ENCODE measurements at regions of chr1 and their contacts with region 1.

Region 1: DNA sequence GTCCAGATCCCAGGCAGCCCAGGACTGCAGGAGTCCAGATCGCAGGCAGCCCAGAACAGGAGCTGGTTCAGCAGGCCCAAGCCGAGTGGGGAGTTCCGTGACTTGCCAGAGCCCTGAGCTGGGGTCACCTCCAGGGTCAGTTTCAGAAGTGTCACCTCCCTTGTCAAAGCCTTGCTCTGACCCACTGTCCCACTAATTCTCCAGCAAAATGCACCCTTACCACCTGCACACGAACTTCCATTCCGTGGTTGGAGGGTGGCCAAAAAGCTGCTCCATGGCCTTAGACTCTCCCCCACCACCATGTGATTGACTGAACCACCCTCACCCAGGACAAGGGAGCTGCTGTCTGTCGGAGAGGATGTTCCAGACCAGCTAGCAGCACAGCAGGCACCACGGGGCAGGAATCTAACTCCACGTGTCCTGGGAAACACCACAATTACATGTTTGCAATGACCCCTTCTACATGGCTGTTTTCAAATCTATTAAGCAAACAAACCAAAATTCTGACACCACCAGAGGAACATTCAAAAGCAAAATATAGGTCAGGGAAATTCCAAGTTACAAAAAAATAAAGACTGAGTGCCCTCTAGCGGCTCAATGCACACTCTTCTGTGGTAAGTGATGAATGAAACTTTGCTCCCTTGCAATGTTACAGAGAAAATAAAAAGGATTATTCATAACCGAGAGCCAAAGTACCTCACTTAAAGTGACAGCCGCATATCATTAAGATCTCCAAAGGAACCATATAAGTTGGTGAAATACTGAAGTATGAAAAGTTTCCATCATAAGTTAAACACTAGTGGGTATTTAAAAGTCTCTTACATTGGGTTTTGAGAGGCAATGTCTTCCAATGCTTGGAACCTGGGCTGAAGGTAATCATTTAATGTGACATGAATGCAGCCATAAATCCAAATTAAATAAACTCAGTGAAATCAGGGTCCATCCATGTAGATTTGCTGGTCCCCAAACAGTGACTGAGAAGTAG is 76.3 kb downstream of the NPHP4 start:
- DNase-seq: peak in 1 of 2 experiments; percentile 45
- H3K4me3 ChIP-seq: no peak overlapping the region
- H3K27ac ChIP-seq: no peak overlapping the region
- H3K4me1 ChIP-seq: peaks cover 0 to 7% (median 2%) of the 10 kb centered on the region in 4 experiments; a peak in 2 of 7 replicates
- H3K27me3 ChIP-seq: no peaks in the 10 kb centered on the region
- CTCF ChIP-seq: peak in 2 of 3 experiments; percentile 52 to 63; a peak in 3 of 4 replicates
- EP300 ChIP-seq: no peak
- POLR2A ChIP-seq: no peak
- RAD21 ChIP-seq: peak; percentile 65 to 74

Region 2: DNA sequence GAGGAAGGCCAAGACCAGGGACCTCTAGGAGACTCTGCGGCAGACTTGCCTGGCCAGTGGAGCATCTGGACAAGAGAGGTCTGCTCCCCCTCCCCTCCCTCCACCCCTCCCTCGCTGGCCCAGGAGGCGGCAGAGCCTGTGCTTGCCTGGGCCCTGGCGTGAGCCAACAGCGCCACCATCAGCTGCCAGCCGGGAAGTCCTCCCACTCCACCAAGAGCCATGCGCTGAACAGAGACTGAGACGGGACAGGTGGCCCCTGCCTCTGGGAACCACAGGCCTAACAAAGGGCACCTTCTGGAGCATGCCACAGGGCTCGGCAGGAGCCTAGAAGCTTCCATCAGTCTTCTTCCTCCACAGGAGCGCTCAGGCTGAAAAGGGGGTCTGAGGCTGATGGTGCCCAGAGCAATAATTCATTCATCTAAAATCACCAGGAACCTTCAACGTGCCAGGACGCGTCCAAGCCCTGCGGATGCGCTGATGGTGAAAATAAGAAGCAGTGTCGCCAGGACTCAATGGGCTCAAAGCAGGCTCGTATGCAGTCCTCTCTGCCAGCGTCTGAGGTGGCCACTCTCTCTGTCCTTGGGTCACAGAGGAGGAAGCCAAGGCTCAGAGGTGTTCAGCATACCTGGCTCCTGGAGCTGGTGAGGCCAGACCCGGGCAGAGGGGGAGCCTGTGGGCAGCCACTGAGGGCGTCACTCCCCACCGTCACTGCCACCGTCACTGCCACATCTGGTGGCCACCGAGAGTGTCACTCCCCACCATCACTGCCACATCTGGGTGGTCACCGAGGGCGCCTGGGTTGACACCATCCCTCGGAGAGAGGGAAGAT is 84.9 kb before region 1 on chr1:
- CTCF ChIA-PET with region 1: interaction called, 20 read pairs
- POLR2A ChIA-PET with region 1: no interaction called
- DNase-seq: peak; percentile 73 to 93
- H3K4me3 ChIP-seq: no peak overlapping the region
- H3K27ac ChIP-seq: no peak overlapping the region
- H3K4me1 ChIP-seq: peaks cover 10 to 20% (median 15%) of the 10 kb centered on the region in 4 experiments; a peak in 6 of 7 replicates
- H3K27me3 ChIP-seq: peaks cover 0 to 7% (median 0%) of the 10 kb centered on the region in 4 experiments; a peak in 2 of 7 replicates
- CTCF ChIP-seq: peak; percentile 96 to 99 (median 98)
- EP300 ChIP-seq: 0 out of 3 replicates have a peak, but pooled peaks of 1 of the 2 experiments have one; percentile 21
- POLR2A ChIP-seq: no peak
- RAD21 ChIP-seq: peak; percentile 100

Region 3: GRCh38 chr1:5836776-5837440 is 79.0 kb before region 1 on chr1:
- CTCF ChIA-PET with region 1: interaction called, 20 read pairs
- POLR2A ChIA-PET with region 1: no interaction called
- DNase-seq: no peak
- H3K4me3 ChIP-seq: no peak overlapping the region
- H3K27ac ChIP-seq: no peak overlapping the region
- H3K4me1 ChIP-seq: peaks cover 2 to 16% (median 5%) of the 10 kb centered on the region in 4 experiments; a peak in 6 of 7 replicates
- H3K27me3 ChIP-seq: no peaks in the 10 kb centered on the region
- CTCF ChIP-seq: no peak
- EP300 ChIP-seq: no peak
- POLR2A ChIP-seq: no peak
- RAD21 ChIP-seq: no peak

Region 4: GRCh38 chr1:5856246-5856815 is 59.5 kb before region 1 on chr1:
- CTCF ChIA-PET with region 1: interaction called, 11 read pairs
- POLR2A ChIA-PET with region 1: no interaction called
- DNase-seq: no peak
- H3K4me3 ChIP-seq: no peak overlapping the region
- H3K27ac ChIP-seq: no peak overlapping the region
- H3K4me1 ChIP-seq: peaks cover 0 to 3% (median 0%) of the 10 kb centered on the region in 4 experiments; a peak in 2 of 7 replicates
- H3K27me3 ChIP-seq: no peaks in the 10 kb centered on the region
- CTCF ChIP-seq: no peak
- EP300 ChIP-seq: no peak
- POLR2A ChIP-seq: no peak
- RAD21 ChIP-seq: no peak

Region 5: GRCh38 chr1:5950994-5951785 is 35.3 kb after region 1 on chr1:
- CTCF ChIA-PET with region 1: no interaction called
- POLR2A ChIA-PET with region 1: no interaction called
- DNase-seq: no peak
- H3K4me3 ChIP-seq: no peak overlapping the region
- H3K27ac ChIP-seq: no peak overlapping the region
- H3K4me1 ChIP-seq: no peaks in the 10 kb centered on the region
- H3K27me3 ChIP-seq: no peaks in the 10 kb centered on the region
- CTCF ChIP-seq: no peak
- EP300 ChIP-seq: no peak
- POLR2A ChIP-seq: no peak
- RAD21 ChIP-seq: no peak

Region 6: DNA sequence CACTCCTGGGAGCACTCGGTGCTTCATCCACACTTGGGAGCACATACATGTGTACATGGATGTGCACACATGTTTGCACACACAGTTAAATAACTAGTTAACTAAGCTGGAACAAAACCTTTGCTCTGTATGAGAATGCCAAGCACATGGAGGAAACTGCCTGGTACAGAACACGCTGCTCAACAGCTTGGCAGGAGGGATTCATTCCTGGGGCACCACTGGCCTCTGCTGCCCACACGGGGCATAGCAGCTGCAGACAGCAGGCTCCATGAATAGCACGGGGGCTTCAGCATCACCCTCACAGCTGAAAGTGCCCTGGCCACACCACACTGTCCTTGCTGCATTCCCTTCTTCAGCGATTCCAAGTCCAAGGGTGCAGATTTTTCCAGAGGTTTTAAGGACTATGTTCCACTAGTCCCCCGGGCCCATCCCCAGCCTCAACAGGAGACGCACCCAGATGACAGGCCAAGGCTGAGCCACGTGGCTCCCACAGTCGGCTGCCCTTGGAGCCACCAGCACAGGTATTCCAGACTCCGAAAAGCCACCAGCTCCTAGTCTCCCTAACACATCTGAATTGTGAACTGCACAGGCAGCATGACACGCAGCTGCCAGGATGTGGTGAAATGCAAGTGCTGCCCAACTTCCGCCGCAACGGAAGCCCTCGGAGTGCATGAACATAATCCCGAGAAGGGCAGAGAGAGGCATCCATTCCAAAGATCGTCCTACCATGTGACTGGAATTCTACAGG is 59.4 kb after region 1 on chr1:
- CTCF ChIA-PET with region 1: interaction called, 21 read pairs
- POLR2A ChIA-PET with region 1: no interaction called
- DNase-seq: peak in 1 of 2 experiments; percentile 73
- H3K4me3 ChIP-seq: no peak overlapping the region
- H3K27ac ChIP-seq: no peak overlapping the region
- H3K4me1 ChIP-seq: peaks cover 0 to 5% (median 4%) of the 10 kb centered on the region in 4 experiments; a peak in 4 of 7 replicates
- H3K27me3 ChIP-seq: no peaks in the 10 kb centered on the region
- CTCF ChIP-seq: peak; percentile 88 to 98 (median 96)
- EP300 ChIP-seq: no peak
- POLR2A ChIP-seq: no peak
- RAD21 ChIP-seq: peak; percentile 96 to 97

Measured in H1 (cell line).